ENCODE measurements at regions of chr13 and their contacts with region 1.

Region 1: DNA sequence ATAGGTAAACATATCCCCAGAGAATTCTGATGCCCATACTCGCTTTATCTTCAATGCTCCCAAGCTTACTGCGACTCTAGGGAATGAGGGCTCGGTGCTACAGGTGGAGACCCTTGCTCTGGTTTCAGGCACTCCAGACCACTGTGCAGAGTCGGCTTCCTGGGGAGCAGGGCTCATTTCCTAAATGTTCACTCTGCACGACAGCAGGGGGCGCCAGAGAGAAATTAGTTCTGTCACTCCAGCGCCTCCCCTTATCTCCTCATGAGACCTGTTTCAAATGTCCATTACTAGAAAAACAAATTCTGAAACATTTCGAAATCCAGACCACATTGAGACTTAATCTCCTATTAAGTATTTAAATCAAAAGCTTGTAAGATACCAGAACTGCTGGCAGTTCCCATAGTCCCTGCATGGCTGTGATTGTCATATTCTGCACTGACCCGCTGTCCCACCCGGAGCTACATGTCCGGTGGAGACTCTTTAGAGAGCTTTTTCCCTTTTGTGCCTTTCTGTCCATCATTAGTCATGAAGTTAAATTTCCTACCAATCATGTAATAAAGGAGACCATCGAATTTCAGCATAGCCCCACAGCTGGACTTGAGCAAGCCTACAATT is 22.4 kb downstream of the EPSTI1 start:
- DNase-seq: peak; percentile 62
- H3K4me3 ChIP-seq: no peak overlapping the region
- H3K27ac ChIP-seq: no peak overlapping the region
- H3K4me1 ChIP-seq: no peaks in the 10 kb centered on the region
- H3K27me3 ChIP-seq: no peaks in the 10 kb centered on the region
- CTCF ChIP-seq: peak; percentile 78 to 80
- POLR2A ChIP-seq: no peak

Region 2: DNA sequence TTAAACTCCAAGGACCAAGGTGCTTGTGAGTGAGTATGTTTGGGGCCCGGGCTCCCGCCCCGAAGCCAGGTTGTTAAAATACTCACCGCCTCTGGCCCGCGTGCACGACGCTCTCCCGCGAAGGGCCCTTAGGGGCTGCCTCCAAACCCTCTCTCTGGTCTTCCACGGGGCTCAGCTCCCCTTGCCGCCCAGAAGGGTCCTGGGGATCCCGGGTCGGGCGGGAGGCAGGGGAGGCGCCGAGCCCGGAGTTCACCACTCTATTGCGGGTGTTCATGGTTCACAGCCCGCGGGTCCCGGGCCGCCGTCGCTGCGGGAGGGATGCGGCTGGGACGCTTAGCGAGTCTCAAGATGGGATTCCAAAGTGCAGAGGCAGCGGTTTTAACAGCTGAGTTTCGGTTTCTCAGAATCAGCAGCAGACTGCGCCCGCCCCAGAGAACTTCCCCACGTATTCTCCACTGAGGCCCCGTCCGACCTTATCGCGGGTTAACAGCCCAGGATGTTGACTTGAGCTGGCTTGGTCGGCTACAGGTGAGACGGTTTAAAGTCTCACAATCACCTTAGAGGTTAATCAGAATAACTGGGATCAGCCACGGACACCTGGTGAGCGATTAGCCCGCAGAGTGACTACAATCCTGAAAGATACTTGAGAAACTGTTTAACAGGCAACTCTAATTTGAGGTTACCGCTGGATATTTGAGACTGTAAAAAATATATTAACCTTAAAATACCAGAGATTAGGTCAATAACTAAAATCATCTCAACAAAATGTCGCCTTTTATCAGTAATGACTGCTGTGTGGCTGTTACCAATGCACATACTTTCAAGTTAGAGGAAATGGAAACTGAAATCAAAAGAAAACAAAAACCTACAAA is 22.5 kb after region 1 on chr13 and contains the start of gene EPSTI1:
- CTCF ChIA-PET with region 1: interaction called, 21 read pairs
- POLR2A ChIA-PET with region 1: no interaction called
- dilution Hi-C with region 1: no loop called
- intact Hi-C with region 1: no loop called
- DNase-seq: peak; percentile 77
- H3K4me3 ChIP-seq: peak within 1 kb of the TSS; percentile 62 to 77 (median 70)
- H3K27ac ChIP-seq: peak within 1 kb of the TSS; percentile 2
- H3K4me1 ChIP-seq: peaks cover 20% of the 10 kb centered on the region
- H3K27me3 ChIP-seq: no peaks in the 10 kb centered on the region
- CTCF ChIP-seq: no peak
- POLR2A ChIP-seq: no peak
- total RNA-seq, gene EPSTI1: 0.74 and 3.1 TPM in 2 replicates

Region 3: DNA sequence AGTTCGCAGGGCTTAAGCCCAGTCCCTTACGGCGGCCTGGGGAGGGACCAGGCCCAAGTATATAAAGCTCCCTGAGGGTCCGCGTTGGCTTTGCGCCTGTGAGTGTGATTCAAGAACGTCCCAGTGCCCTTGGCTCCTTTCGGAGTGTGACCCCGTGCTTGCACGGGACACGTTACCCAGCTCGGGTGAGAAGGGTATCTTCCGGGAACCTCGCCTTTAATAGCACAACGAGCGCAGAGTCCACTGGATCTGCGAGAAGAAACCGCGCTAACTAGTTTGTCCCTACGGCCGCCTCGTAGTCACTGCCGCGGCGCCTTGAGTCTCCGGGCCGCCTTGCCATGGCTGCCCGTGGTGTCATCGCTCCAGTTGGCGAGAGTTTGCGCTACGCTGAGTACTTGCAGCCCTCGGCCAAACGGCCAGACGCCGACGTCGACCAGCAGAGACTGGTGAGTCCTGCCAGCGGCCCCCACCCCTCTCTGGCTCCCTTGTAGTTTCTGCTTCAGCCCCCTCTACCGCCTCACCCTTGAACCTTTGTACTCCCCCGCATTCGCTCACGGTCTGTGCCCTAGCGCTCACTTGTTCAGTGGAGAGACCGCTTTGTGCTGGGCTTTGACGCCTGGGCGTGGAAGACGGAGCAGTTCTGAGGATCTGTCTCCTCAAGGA is 53.8 kb after region 1 on chr13 and contains the start of gene DNAJC15:
- CTCF ChIA-PET with region 1: interaction called, 4 read pairs
- POLR2A ChIA-PET with region 1: no interaction called
- dilution Hi-C with region 1: no loop called
- intact Hi-C with region 1: loop called (anchors 2 kb)
- DNase-seq: peak; percentile 91
- H3K4me3 ChIP-seq: peak within 1 kb of the TSS; percentile 62 to 92 (median 70)
- H3K27ac ChIP-seq: peak within 1 kb of the TSS; percentile 59
- H3K4me1 ChIP-seq: peaks cover 2% of the 10 kb centered on the region
- H3K27me3 ChIP-seq: no peaks in the 10 kb centered on the region
- CTCF ChIP-seq: no peak
- POLR2A ChIP-seq: peak; percentile 89
- total RNA-seq, gene DNAJC15: 20.9 and 21.8 TPM in 2 replicates

Region 4: GRCh38 chr13:43085545-43085944 is 115.9 kb after region 1 on chr13:
- CTCF ChIA-PET with region 1: interaction called, 13 read pairs
- POLR2A ChIA-PET with region 1: no interaction called
- dilution Hi-C with region 1: no loop called
- intact Hi-C with region 1: no loop called
- DNase-seq: peak; percentile 59
- H3K4me3 ChIP-seq: no peak overlapping the region
- H3K27ac ChIP-seq: no peak overlapping the region
- H3K4me1 ChIP-seq: peaks cover 3% of the 10 kb centered on the region
- H3K27me3 ChIP-seq: no peaks in the 10 kb centered on the region
- CTCF ChIP-seq: peak in 1 of 2 donors; percentile 35
- POLR2A ChIP-seq: no peak

Region 5: DNA sequence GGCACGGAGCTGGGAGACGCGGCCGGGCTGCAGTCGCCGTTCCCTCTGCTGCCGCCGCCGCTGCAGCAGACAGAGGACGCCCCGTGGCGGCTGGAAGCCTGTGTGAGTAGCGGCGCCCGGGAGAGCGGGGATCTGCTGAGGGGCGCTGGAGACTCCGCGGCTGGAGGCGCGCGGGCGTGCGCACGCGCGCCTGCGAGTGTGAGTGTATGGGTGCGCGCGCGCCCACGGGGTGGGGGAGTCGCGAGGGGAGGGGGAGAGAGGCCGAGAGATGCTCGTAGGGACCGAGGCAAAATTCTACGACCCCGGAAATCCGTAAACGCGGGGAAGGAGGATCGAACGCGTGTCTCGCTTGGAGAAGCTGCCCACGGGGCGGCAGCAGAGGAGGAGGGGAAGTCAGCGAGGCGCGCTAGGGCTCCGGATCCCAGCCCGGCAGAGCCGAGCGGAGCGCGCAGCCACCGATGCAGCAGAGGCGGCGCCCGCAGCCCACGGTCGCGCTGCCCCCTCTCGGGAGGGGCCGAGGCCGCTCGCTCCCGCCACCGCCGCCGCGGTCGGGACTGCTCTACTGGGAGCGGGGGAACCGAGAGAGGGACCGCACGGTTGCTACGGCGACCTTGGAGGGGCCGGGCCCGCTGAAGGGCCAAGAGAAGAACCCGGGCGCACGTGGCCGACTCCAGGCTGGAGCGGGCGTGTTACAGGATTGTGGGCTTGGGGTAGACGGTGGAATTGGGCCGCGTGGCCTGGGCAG is 817.3 kb after region 1 on chr13 and contains the start of gene ENOX1:
- CTCF ChIA-PET with region 1: no interaction called
- POLR2A ChIA-PET with region 1: no interaction called
- dilution Hi-C with region 1: no loop called
- intact Hi-C with region 1: loop called (anchors 5 kb)
- DNase-seq: peak; percentile 45
- H3K4me3 ChIP-seq: peak within 1 kb of the TSS; percentile 47 to 51 (median 48)
- H3K27ac ChIP-seq: no peak within 1 kb of the TSS
- H3K4me1 ChIP-seq: peaks cover 18% of the 10 kb centered on the region
- H3K27me3 ChIP-seq: peaks cover 0 to 2% of the 10 kb centered on the region in 2 experiments
- CTCF ChIP-seq: peak in 1 of 2 donors; percentile 8
- POLR2A ChIP-seq: no peak
- total RNA-seq, gene ENOX1: 0.28 and 0.97 TPM in 2 replicates

Region 6: DNA sequence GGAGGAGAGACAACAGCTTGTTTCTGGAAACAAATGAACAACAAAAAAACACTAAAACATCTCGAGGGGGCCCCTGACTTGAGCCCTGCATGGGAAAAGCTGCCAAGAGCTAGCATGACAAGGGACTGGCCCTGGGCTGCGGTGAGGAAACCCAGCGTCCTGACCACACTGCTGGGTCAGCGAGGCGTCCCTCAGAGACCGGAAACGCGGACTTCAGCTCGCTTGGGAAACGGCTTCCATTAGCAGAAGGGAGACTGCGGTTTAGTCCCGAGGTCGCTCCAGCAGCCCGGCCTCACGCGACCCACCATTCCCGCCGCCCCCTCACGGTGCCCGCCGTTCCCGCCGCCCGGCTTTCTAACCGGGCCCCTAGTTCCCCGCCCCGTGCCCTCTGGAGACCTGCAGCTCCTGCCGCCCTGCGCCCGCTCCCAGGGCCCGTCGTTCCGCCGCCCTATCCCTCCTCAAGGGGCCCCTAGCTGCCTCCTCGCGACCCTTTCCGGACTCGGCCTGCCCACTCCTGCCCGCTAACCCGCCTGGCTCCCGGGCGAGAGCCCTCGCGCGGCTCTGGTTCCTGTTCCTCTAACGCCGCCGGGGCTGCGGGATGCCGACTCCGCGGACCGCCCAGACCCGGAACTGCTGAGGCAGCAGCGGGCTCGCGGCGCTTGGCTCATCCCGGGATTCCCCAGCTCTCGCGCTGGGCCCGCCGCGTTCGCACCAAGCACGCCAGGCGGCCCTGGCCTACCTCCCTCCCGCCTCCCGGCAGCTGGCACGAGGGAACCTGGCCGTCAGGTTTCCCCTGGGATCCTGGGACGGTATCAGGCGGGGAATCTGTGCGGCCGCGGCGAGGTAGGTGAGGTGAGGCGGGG is 909.5 kb after region 1 on chr13 and contains the start of gene CCDC122:
- CTCF ChIA-PET with region 1: interaction called, 3 read pairs
- POLR2A ChIA-PET with region 1: no interaction called
- dilution Hi-C with region 1: no loop called
- intact Hi-C with region 1: loop called (anchors 2 kb)
- DNase-seq: peak; percentile 79
- H3K4me3 ChIP-seq: peak within 1 kb of the TSS; percentile 71 to 92 (median 76)
- H3K27ac ChIP-seq: peak within 1 kb of the TSS; percentile 90
- H3K4me1 ChIP-seq: peaks cover 11% of the 10 kb centered on the region
- H3K27me3 ChIP-seq: no peaks in the 10 kb centered on the region
- CTCF ChIP-seq: no peak
- POLR2A ChIP-seq: peak; percentile 74
- total RNA-seq, gene CCDC122: 5.1 and 7.5 TPM in 2 replicates

Measured in endothelial cell of umbilical vein (primary cell).